ENCODE measurements at regions of chr1 and their contacts with region 1.

Region 1: DNA sequence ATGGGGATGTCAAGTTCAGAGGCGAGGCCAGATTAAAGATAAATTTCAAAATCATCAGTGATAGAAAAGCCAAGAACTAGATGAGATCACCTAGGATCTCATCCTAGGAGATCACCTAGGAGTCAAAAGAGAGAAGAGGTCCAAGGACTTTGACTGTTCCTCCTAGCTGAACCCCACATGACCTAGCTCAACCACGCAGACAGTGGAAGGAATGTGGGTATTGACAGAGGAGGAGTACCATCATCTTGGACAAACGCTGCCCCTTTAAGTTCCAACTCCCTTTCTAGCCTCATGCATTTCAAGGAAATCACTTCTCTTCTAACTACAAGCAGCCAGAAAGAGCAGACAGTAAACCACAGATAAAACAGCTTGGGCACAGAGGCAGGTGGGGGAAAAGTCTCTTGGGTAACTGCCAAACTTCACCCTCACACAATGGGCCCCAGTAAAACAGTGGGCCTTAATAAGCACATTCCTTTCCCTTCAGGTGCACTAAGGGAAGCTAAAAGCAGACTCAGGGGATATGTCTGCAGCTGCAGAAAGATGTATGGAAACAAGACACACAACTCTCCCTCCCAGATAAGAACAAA is 12.5 kb upstream of the FAM76A start:
- DNase-seq: no peak
- ATAC-seq: no peak
- H3K4me3 ChIP-seq: no peak overlapping the region
- H3K27ac ChIP-seq: no peak overlapping the region
- H3K4me1 ChIP-seq: no peaks in the 10 kb centered on the region
- H3K27me3 ChIP-seq: peaks cover 12% of the 10 kb centered on the region
- CTCF ChIP-seq: no peak
- POLR2A ChIP-seq: no peak
- RAD21 ChIP-seq: no peak

Region 2: DNA sequence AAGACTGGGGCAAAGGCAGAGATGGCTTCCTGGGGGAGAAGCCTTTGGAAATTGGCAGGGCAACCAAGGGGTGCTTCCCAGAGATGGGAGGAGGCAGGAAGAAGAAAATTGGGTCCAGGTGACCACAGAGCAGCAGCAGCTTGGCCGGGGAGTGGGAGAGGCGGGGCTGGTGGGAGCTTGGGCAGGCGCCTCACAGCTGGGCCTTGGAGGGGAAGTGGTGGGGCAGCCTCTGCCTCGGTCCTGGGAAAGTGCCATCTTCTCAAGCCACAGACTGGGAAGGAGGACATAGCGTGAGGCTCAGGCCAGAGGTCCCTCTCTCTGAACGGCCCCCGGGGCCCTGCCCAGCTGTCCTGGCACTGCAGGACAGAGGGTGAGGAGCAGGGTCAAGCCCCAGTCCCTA is 199.3 kb before region 1 on chr1:
- CTCF ChIA-PET with region 1: no interaction called
- POLR2A ChIA-PET with region 1: no interaction called
- dilution Hi-C with region 1: no loop called
- in situ Hi-C with region 1: no loop called
- intact Hi-C with region 1: no loop called
- DNase-seq: no peak
- ATAC-seq: no peak
- H3K4me3 ChIP-seq: no peak overlapping the region
- H3K27ac ChIP-seq: no peak overlapping the region
- H3K4me1 ChIP-seq: no peaks in the 10 kb centered on the region
- H3K27me3 ChIP-seq: no peaks in the 10 kb centered on the region
- CTCF ChIP-seq: no peak
- POLR2A ChIP-seq: no peak
- RAD21 ChIP-seq: no peak

Region 3: DNA sequence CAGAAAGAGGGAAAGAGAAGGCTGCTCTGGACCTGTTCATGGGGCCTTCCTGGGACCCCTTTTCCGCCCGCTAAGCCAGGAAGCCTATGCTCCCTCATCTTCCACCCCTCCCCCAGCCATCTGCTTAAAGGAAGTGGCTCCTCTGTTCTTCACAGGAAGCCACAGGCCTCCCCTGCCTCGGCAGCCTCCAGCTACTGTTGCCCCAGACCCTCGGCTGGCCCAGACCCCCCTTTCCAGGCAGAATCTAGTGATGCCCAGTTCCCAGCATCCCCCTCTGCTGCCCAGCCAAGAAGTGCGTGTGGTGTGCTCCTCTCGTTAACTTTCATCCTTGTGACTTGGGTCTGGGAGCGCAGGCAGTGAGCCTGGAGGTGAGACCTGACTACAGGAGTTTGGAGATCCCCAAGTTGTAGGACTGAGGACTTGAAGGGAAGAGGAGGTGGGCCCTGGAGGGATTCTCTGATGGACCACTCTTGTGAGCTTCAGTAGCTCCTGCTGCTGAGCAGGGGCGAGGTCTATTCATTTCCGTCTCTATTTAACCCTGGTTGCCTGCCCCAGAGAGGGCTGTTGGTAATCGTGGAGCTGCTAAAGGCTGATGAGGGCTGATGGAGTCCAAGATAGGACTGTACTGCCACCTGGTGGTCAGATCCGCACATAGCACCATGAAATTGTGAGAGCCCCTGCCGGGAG is 50.4 kb before region 1 on chr1:
- CTCF ChIA-PET with region 1: no interaction called
- POLR2A ChIA-PET with region 1: no interaction called
- dilution Hi-C with region 1: no loop called
- in situ Hi-C with region 1: no loop called
- intact Hi-C with region 1: no loop called
- DNase-seq: peak; percentile 76
- ATAC-seq: peak; percentile 86
- H3K4me3 ChIP-seq: no peak overlapping the region
- H3K27ac ChIP-seq: 0 out of 2 replicates have a peak overlapping the region, but pooled peaks have one; percentile 2
- H3K4me1 ChIP-seq: peaks cover 14% of the 10 kb centered on the region
- H3K27me3 ChIP-seq: no peaks in the 10 kb centered on the region
- CTCF ChIP-seq: peak; percentile 92
- POLR2A ChIP-seq: 0 out of 2 replicates have a peak, but pooled peaks have one; percentile 32
- RAD21 ChIP-seq: peak; percentile 89

Region 4: DNA sequence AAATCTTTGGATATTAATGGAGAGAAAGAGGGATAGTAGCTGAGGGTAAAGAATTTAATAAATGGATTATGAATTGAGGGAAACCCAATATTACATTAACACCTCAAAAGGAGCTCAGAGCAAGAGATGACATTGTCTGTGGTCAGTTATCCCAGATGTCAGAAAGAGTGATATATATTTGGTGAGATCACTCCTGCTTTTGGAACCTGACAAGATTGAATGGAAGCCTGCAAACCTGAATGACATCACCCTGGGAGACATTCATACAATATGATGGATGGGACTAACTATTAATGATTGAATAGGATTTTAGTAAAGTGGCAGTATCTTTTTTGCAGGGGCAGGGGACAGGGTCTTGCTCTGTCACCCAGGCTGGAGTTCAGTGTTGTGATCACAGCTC is 34.5 kb before region 1 on chr1:
- CTCF ChIA-PET with region 1: interaction called, 3 read pairs
- POLR2A ChIA-PET with region 1: no interaction called
- dilution Hi-C with region 1: no loop called
- in situ Hi-C with region 1: loop called (anchors 5 kb)
- intact Hi-C with region 1: no loop called
- DNase-seq: no peak
- ATAC-seq: no peak
- H3K4me3 ChIP-seq: no peak overlapping the region
- H3K27ac ChIP-seq: no peak overlapping the region
- H3K4me1 ChIP-seq: no peaks in the 10 kb centered on the region
- H3K27me3 ChIP-seq: peaks cover 3% of the 10 kb centered on the region
- CTCF ChIP-seq: no peak
- POLR2A ChIP-seq: no peak
- RAD21 ChIP-seq: no peak

Measured in IMR-90 (cell line).